ENCODE measurements at regions of chr9 and their contacts with region 1.

Region 1: DNA sequence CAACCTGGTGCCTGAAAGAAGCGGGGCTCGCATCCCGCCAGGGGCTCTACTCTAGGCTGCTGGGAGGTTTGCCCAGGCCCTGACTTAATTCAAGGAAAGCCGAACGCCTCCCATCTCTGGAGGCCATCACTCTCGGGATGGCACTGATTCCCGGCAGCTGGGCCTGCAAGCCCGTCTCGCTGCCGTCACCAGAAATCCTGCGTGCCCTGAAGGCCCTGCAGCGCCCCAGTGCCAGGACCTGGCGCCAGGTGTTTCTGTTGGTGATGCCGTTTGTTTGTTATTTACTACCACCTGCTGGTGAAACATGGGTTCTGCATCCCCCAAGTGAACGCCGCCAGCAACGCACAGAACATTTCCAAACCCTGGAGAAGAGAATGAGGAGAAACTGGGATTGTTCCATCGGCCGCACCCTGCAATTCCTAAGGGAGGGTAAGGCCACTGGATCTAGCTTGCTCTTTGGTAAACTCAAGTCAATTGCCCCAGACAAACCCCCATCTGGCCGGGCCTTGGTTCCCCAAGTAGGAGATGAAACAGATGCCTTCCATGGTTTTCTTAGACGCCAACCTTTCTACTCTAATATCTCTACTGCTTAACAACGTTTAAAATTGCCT is 77.9 kb downstream of the AK8 start:
- DNase-seq: peak; percentile 61
- ATAC-seq: peak; percentile 66 to 80

Region 2: GRCh38 chr9:132507746-132508469 is 292.2 kb before region 1 on chr9:
- intact Hi-C with region 1: loop called (anchors 2 to 5 kb)
- DNase-seq: peak; percentile 61
- ATAC-seq: peak; percentile 69 to 76

Region 3: GRCh38 chr9:132669698-132670456 is 130.3 kb before region 1 on chr9 and contains the start of gene DDX31:
- intact Hi-C with region 1: loop called in 1 of 2 experiments (anchors 5 kb)
- DNase-seq: peak; percentile 92
- ATAC-seq: peak; percentile 98 to 99
- total RNA-seq, gene DDX31: 5.2 to 7.9 TPM